ENCODE measurements at regions of chr3 and their contacts with region 1.

Region 1: DNA sequence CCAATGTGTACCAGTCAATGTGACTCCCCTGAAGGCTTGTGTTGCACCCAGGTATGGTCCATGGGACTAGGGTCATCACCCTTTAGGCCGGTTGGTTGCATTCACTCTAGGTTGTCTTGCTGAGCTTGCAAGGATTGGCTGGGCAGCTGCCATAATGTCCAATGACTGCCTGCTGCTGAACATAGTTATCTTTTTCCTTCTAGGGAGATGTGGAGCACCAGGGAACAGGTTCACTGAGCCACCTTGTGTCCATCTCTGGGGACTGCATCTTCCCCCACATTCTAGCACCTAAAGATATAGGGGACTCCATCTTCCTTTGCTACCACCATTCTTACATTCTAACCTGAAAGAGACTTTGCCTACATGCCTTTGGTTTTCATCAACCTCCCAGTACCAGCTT is 580.4 kb upstream of the TBL1XR1 start:
- DNase-seq: peak; percentile 28 to 44
- H3K4me3 ChIP-seq: no peak overlapping the region
- H3K27ac ChIP-seq: no peak overlapping the region
- H3K4me1 ChIP-seq: peaks cover 24% of the 10 kb centered on the region
- H3K27me3 ChIP-seq: no peaks in the 10 kb centered on the region
- CTCF ChIP-seq: peak; percentile 56

Region 2: GRCh38 chr3:177050501-177051237 is 727.0 kb before region 1 on chr3:
- CTCF ChIA-PET with region 1: interaction called, 3 read pairs
- POLR2A ChIA-PET with region 1: no interaction called
- intact Hi-C with region 1: loop called (anchors 2 kb)
- DNase-seq: peak in 1 of 2 experiments; percentile 59
- H3K4me3 ChIP-seq: no peak overlapping the region
- H3K27ac ChIP-seq: peak overlapping the region; percentile 40
- H3K4me1 ChIP-seq: peaks cover 15% of the 10 kb centered on the region
- H3K27me3 ChIP-seq: no peaks in the 10 kb centered on the region
- CTCF ChIP-seq: peak; percentile 90

Region 3: GRCh38 chr3:177448987-177449975 is 328.4 kb before region 1 on chr3:
- CTCF ChIA-PET with region 1: no interaction called
- POLR2A ChIA-PET with region 1: no interaction called
- intact Hi-C with region 1: loop called (anchors 1 kb)
- DNase-seq: peak; percentile 82 to 99
- H3K4me3 ChIP-seq: peak overlapping the region; percentile 9; the same call in 1 of the 2 replicates
- H3K27ac ChIP-seq: peak overlapping the region; percentile 89
- H3K4me1 ChIP-seq: peaks cover 66% of the 10 kb centered on the region
- H3K27me3 ChIP-seq: no peaks in the 10 kb centered on the region
- CTCF ChIP-seq: no peak

Region 4: GRCh38 chr3:177603148-177603603 is 174.5 kb before region 1 on chr3:
- CTCF ChIA-PET with region 1: no interaction called
- POLR2A ChIA-PET with region 1: no interaction called
- intact Hi-C with region 1: loop called (anchors 1 kb)
- DNase-seq: no peak
- H3K4me3 ChIP-seq: peak overlapping the region; percentile 9; the same call in 1 of the 2 replicates
- H3K27ac ChIP-seq: peak overlapping the region; percentile 89
- H3K4me1 ChIP-seq: peaks cover 61% of the 10 kb centered on the region
- H3K27me3 ChIP-seq: no peaks in the 10 kb centered on the region
- CTCF ChIP-seq: no peak

Region 5: DNA sequence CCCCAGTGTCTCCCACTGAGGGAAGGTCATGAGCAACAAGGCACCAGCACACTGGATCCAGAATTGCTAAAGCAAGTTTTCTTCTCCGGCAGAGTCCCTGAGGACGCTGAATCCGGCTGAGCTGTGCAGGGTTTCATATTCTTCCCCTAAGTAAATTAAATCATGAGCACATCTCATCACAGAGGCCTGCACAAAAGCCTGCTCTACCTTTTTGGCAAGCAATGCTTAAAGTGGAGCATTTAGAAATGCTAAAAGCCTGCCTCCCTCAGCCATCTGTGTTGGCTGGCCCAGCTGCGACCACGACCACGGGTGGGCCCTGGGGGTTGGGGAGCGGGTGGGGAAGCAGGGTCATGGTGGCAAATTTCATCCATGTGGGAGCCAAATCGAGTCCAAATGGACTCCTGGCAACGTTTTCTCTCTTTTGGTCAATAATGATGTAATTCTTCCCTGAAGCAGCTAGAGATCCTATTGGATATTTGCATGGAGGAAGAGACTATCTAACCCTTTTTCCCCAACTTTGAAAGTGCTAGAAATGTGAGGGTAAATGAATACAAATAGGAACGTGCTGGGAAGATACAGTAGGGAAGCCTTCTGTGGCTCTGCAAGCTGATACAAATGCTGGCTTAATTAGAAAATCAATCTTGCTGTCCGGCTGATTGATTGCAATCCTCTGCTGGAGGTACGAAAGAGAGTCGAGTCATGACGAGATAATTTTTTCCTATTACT is 47.6 kb before region 1 on chr3:
- CTCF ChIA-PET with region 1: no interaction called
- POLR2A ChIA-PET with region 1: no interaction called
- intact Hi-C with region 1: loop called (anchors 5 kb)
- DNase-seq: no peak
- H3K4me3 ChIP-seq: no peak overlapping the region
- H3K27ac ChIP-seq: no peak overlapping the region
- H3K4me1 ChIP-seq: peaks cover 10% of the 10 kb centered on the region
- H3K27me3 ChIP-seq: no peaks in the 10 kb centered on the region
- CTCF ChIP-seq: no peak

Region 6: DNA sequence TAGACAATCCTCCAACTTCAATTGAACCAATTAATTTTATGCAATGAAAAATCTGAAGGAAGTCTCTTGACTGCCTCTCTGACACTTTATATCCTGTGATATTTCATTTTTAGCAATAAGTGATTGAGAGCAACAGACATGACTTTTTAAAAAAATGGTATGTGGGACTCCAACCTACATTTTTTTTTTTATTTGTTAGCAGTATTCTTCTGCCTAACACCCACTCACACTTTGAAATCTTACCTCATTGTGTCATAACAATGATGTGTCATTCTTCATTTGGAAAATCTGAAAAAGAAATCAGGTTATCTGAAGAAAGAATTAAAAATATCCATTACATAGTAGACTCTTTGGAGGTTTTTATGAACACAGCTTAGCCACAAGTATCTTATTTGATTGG is 217.3 kb after region 1 on chr3:
- CTCF ChIA-PET with region 1: no interaction called
- POLR2A ChIA-PET with region 1: no interaction called
- intact Hi-C with region 1: no loop called
- DNase-seq: no peak
- H3K4me3 ChIP-seq: no peak overlapping the region
- H3K27ac ChIP-seq: no peak overlapping the region
- H3K4me1 ChIP-seq: no peaks in the 10 kb centered on the region
- H3K27me3 ChIP-seq: no peaks in the 10 kb centered on the region
- CTCF ChIP-seq: no peak

Region 7: GRCh38 chr3:178084938-178085816 is 307.5 kb after region 1 on chr3:
- CTCF ChIA-PET with region 1: no interaction called
- POLR2A ChIA-PET with region 1: no interaction called
- intact Hi-C with region 1: loop called (anchors 5 kb)
- DNase-seq: no peak
- H3K4me3 ChIP-seq: no peak overlapping the region
- H3K27ac ChIP-seq: no peak overlapping the region
- H3K4me1 ChIP-seq: peaks cover 8% of the 10 kb centered on the region
- H3K27me3 ChIP-seq: no peaks in the 10 kb centered on the region
- CTCF ChIP-seq: no peak